ENCODE measurements at regions of chr18 and their contacts with region 1.

Region 1: DNA sequence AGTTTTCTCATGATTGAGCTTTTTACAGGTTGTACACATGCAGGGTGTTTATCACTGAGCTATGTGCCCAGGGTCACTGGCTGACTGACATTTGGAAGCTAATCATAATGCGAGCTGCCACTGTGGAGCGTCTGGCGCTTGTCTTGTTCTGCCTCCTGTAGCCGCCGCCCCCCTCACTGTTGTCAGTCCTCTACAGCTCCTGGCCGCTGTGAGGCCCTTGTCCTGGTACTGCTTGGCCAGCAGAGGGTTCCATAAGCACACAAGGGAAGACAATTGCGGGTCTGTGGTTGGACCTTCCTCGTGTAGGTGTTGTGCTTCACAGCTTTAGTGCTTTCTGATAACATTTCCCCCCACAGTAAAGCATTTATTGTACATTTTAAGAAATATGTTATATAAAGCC is 105.6 kb upstream of the LDLRAD4 start:
- DNase-seq: peak; percentile 19
- H3K4me3 ChIP-seq: no peak overlapping the region
- H3K27ac ChIP-seq: no peak overlapping the region
- H3K4me1 ChIP-seq: no peaks in the 10 kb centered on the region
- H3K27me3 ChIP-seq: no peaks in the 10 kb centered on the region
- CTCF ChIP-seq: peak; percentile 14; the same call in 1 of the 2 replicates

Region 2: DNA sequence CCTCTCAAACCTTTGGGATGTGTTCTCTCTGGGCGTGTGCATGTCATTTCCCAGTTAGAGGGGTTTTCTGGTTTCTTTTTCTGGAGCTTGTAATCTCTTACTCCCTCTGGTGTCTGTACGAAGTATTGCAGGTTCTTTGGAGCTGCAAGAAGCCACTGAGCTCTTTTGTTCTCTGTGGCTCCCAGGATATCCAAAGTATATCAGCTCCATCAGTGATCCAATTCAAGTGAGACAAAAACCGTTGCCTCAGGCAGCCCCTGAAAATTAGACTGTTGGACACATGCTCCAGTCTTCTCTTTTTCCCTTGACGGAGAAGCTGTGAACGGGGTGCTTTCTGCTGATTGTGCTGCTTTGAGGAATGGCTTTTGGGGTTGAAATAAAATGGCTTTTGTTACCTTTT is 46.6 kb after region 1 on chr18:
- CTCF ChIA-PET with region 1: interaction called, 13 read pairs
- POLR2A ChIA-PET with region 1: no interaction called
- intact Hi-C with region 1: no loop called
- DNase-seq: peak; percentile 82
- H3K4me3 ChIP-seq: no peak overlapping the region
- H3K27ac ChIP-seq: no peak overlapping the region
- H3K4me1 ChIP-seq: no peaks in the 10 kb centered on the region
- H3K27me3 ChIP-seq: no peaks in the 10 kb centered on the region
- CTCF ChIP-seq: peak; percentile 76

Measured in A673 (cell line).